SK-N-SH (cell line): ENCODE measurements at regions of chr5 and their contacts with region 1.

Region 1: GRCh38 chr5:95760273-95761191 is 29.4 kb downstream of the RHOBTB3 start:
- DNase-seq: no peak
- H3K4me3 ChIP-seq: peak overlapping the region; percentile 33 to 52; a peak in 3 of 4 replicates
- H3K27ac ChIP-seq: peak overlapping the region; percentile 77 to 88
- H3K4me1 ChIP-seq: peaks cover 33 to 40% of the 10 kb centered on the region in 2 experiments; a peak in 3 of 4 replicates
- H3K27me3 ChIP-seq: no peaks in the 10 kb centered on the region
- CTCF ChIP-seq: no peak
- EP300 ChIP-seq: peak; percentile 16 to 86; a peak in 3 of 4 replicates
- RAD21 ChIP-seq: no peak

Region 2: DNA sequence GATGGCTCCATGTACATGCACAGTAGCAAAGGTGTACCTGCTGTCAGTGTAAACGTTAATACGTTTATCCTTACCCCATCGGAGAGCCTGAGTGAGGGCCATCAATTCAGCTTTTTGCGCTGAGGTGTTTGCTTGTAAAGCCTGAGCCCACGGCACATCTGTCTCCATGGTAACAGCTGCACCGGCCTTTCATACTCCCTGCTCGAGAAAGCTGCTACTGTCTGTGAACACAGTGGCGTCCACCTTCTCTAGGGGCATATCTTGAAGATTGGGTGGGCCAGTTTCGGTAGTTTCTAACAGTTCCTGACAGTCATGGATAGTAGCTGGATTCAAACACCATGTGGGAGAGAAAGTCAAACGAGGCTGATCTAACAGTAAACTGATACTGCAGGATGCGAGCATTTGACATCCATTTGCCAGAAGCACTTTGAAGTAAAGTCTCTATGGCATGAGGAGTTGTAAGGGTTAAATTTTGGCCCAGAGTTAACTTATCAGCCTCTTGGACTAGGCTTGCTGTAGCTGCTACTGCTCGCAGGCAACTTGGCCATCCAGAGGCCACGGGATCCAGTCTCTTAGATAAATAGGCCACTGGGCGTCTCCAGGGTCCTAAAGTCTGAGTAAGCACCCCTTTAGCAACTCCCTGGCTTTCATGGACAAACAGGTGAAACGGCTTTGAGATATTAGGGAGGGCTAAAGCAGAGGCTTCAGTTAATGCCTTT is 50.4 kb before region 1 on chr5:
- CTCF ChIA-PET with region 1: no interaction called
- POLR2A ChIA-PET with region 1: no interaction called
- DNase-seq: no peak
- H3K4me3 ChIP-seq: no peak overlapping the region
- H3K27ac ChIP-seq: no peak overlapping the region
- H3K4me1 ChIP-seq: peaks cover 4 to 6% of the 10 kb centered on the region in 2 experiments; a peak in 2 of 4 replicates
- H3K27me3 ChIP-seq: no peaks in the 10 kb centered on the region
- CTCF ChIP-seq: no peak
- EP300 ChIP-seq: no peak
- RAD21 ChIP-seq: no peak

Region 3: DNA sequence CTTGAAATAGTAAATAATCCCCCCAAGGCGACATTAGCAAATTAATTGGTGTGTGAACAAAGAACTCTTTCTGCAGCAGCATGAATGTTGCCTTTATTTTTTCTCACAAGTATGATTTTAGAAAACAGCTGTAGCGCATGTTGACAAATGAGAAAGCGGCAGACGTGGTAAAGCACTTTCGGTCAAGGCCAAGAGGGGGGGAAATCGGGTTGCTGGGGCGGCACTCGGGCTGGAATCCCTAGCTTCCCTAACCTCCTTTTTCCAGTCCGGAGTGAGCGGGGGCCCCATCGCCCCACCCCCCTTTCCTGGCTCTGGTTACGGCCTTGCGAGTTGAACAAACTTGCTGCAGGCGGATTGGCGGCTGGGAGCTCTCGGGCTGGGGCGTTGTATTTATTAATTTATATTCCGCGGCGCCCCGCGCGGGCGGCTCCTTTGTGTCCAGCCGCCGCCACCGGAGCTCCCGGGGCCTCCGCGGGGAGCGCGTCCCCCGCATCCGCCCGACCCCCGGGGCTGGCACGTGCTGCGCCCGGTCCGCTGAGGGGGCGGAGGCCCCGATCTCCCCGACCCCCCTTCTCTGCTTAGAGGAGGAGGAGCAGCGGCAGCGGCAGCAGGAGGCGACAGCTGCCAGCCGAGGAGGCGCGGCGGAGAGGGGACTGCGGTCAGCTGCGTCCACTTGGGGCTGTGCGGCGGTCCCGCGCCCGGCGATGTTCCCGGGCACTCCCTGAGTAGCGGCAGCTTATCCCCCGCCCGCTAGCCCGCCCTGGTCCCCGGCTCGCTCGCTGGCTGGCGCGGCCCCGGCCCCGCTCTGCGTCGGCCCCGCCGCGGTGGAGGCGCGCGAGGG is 29.6 kb before region 1 on chr5 and contains the start of gene RHOBTB3:
- CTCF ChIA-PET with region 1: interaction called, 3 read pairs
- POLR2A ChIA-PET with region 1: interaction called, 10 read pairs
- DNase-seq: peak; percentile 91
- H3K4me3 ChIP-seq: peak within 1 kb of the TSS; percentile 80 to 98
- H3K27ac ChIP-seq: peak within 1 kb of the TSS; percentile 77 to 97
- H3K4me1 ChIP-seq: peaks cover 22 to 38% of the 10 kb centered on the region in 2 experiments; a peak in 3 of 4 replicates
- H3K27me3 ChIP-seq: no peaks in the 10 kb centered on the region
- CTCF ChIP-seq: no peak
- EP300 ChIP-seq: no peak; a peak in 1 of 4 replicates
- RAD21 ChIP-seq: peak; percentile 23; the same call in 1 of the 2 replicates
- polyA plus RNA-seq, gene RHOBTB3: 59.3 and 73.6 TPM in 2 replicates